Caco-2 (cell line): ENCODE measurements at regions of chr11 and their contacts with region 1.

Region 1: DNA sequence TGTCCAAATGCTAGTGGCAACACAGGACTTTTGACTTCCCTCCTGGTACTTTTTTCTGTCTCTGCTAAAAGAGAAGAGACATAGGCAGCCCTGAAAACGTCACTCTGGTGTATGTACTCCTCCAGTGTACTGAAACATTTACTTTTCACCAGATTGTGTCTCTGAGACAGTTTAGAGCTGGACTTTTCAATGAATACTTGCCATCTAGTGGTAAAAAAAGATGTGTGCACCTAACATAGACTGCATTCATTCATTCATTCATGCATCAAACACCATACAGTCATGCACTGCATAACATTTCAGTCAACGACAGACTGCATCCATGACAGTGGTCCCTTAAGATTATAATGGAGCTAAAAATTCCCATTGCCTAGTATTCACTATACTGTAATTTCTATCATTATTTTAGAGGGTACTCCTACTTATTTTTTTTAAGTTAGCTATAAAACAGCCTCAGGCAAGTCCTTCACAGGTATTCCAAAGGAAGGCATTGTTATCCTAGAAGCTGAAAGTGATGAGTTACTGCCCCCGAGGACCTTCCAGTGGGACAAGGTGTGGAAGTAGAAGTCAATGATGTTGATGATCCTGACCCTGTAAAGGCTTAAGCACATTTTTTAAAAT is 186.2 kb downstream of the SPON1 start:
- DNase-seq: peak in 1 of 2 experiments; percentile 34
- H3K4me3 ChIP-seq: no peak overlapping the region
- H3K4me3 Mint-ChIP-seq: no peak overlapping the region
- H3K27ac Mint-ChIP-seq: no peak overlapping the region
- H3K4me1 ChIP-seq: no peaks in the 10 kb centered on the region
- H3K4me1 Mint-ChIP-seq: peaks cover 6% of the 10 kb centered on the region
- H3K27me3 ChIP-seq: no peaks in the 10 kb centered on the region
- H3K27me3 Mint-ChIP-seq: no peaks in the 10 kb centered on the region
- CTCF ChIP-seq: peak; percentile 63 to 65

Region 2: GRCh38 chr11:13772223-13773046 is 376.3 kb before region 1 on chr11:
- CTCF ChIA-PET with region 1: interaction called, 4 read pairs
- POLR2A ChIA-PET with region 1: no interaction called
- intact Hi-C with region 1: loop called (anchors 1 kb)
- DNase-seq: peak in 1 of 2 experiments; percentile 70
- H3K4me3 ChIP-seq: no peak overlapping the region
- H3K4me3 Mint-ChIP-seq: no peak overlapping the region
- H3K27ac Mint-ChIP-seq: no peak overlapping the region
- H3K4me1 ChIP-seq: 0 out of 2 replicates have a peak, but pooled peaks cover 8% of the 10 kb centered on the region
- H3K4me1 Mint-ChIP-seq: no peaks in the 10 kb centered on the region
- H3K27me3 ChIP-seq: no peaks in the 10 kb centered on the region
- H3K27me3 Mint-ChIP-seq: peaks cover 2% of the 10 kb centered on the region
- CTCF ChIP-seq: peak; percentile 53 to 75

Region 3: GRCh38 chr11:13955971-13956421 is 192.8 kb before region 1 on chr11:
- CTCF ChIA-PET with region 1: interaction called, 9 read pairs
- POLR2A ChIA-PET with region 1: no interaction called
- intact Hi-C with region 1: loop called (anchors 1 kb)
- DNase-seq: peak; percentile 55 to 69
- H3K4me3 ChIP-seq: no peak overlapping the region
- H3K4me3 Mint-ChIP-seq: no peak overlapping the region
- H3K27ac Mint-ChIP-seq: no peak overlapping the region
- H3K4me1 ChIP-seq: no peaks in the 10 kb centered on the region
- H3K4me1 Mint-ChIP-seq: no peaks in the 10 kb centered on the region
- H3K27me3 ChIP-seq: no peaks in the 10 kb centered on the region
- H3K27me3 Mint-ChIP-seq: peaks cover 3% of the 10 kb centered on the region
- CTCF ChIP-seq: peak; percentile 87 to 97

Region 4: GRCh38 chr11:13970986-13971385 is 177.8 kb before region 1 on chr11:
- CTCF ChIA-PET with region 1: interaction called, 22 read pairs
- POLR2A ChIA-PET with region 1: no interaction called
- intact Hi-C with region 1: no loop called
- DNase-seq: peak; percentile 73 to 75
- H3K4me3 ChIP-seq: no peak overlapping the region
- H3K4me3 Mint-ChIP-seq: no peak overlapping the region
- H3K27ac Mint-ChIP-seq: peak overlapping the region; percentile 63
- H3K4me1 ChIP-seq: peaks cover 61% of the 10 kb centered on the region
- H3K4me1 Mint-ChIP-seq: peaks cover 53% of the 10 kb centered on the region
- H3K27me3 ChIP-seq: no peaks in the 10 kb centered on the region
- H3K27me3 Mint-ChIP-seq: no peaks in the 10 kb centered on the region
- CTCF ChIP-seq: peak; percentile 36 to 70

Region 5: DNA sequence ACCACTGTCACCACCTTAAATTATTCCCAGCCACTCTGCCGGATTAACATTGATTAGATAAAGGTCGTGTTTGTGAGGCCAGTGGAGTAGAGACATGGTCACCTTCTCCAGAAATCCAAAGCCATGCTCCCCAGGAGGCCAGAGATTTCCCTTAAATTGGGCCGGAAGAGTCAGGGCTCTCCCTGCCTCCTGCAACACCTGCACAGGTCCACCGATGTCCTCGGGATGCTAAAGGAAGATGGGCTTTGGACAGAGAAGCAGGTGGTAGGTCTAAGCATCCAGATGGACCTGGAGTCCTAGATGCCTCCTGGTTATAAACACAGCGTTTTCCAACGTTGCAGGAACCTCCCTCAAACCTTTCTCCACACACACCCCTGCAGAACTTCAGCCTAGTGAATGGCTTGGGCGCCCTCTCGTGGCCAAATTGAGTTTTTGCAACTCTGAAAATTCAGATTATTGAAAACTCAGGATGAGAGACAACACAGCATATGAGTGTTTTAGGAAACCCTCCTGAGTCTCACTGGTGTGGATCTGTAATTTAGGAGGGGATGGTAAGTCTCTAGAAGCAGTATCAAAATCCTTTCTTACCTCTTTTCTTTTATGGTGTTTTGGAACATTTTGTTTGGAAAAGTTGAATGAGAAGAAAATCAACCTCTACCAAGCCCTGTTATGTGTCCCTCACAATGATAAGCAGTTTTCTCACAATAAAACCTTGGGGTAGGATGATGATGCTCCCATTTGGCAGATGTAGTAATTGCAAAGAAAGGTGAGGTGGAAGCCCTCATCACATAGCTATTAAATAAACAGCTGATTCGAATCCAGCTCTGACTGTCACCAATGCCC is 100.6 kb after region 1 on chr11:
- CTCF ChIA-PET with region 1: no interaction called
- POLR2A ChIA-PET with region 1: no interaction called
- intact Hi-C with region 1: loop called (anchors 1 kb)
- DNase-seq: peak; percentile 59 to 70
- H3K4me3 ChIP-seq: no peak overlapping the region
- H3K4me3 Mint-ChIP-seq: no peak overlapping the region
- H3K27ac Mint-ChIP-seq: no peak overlapping the region
- H3K4me1 ChIP-seq: peaks cover 4% of the 10 kb centered on the region
- H3K4me1 Mint-ChIP-seq: peaks cover 7% of the 10 kb centered on the region
- H3K27me3 ChIP-seq: no peaks in the 10 kb centered on the region
- H3K27me3 Mint-ChIP-seq: no peaks in the 10 kb centered on the region
- CTCF ChIP-seq: peak; percentile 85 to 93